ENCODE measurements at regions of chr10 and their contacts with region 1.

Region 1: DNA sequence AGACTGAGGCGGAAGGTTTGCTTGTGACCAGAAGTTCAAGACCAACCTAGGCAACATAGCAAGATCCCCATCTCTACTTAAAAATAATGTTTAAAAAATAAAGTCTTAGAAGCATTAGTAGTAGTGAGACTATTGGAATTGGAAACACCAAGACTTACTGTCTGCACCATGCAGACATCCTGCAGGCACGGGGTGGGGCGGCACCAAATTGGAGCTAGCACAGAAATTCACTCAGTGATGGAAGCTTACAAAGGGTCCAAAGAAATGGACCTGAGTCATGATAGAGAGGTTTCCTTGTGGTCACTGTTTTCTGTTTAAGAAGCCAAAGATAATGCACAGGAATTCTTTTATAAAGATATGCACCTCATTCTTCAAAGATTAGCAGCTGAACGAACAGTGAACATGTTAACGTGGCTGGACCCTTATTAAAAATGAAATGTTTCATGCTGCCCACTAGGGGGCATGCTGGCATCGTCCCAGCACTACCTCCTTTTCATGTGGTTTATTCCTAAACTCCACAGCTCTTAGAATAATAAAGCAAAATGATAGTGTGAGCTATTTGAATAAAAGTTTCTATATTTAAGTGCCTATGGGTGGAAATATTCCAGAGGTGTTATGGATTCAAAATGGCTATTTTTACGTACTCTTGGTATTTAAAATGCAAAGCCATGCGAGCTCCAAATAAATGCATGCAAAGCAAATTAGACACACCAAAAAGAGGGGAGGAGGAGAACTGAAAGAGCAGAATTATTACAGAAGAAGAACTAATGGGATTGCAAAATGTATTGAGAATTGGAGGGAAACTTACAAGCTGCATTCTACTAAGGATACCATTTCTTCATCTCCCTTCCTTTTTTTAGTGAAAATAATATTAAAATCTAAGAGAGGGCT is 28.6 kb downstream of the PDSS1 start:
- DNase-seq: peak; percentile 71
- ATAC-seq: peak; percentile 56
- H3K4me3 Mint-ChIP-seq: no peak overlapping the region
- H3K27ac Mint-ChIP-seq: no peak overlapping the region
- H3K4me1 Mint-ChIP-seq: peaks cover 4% of the 10 kb centered on the region
- H3K27me3 Mint-ChIP-seq: no peaks in the 10 kb centered on the region

Region 2: GRCh38 chr10:26682931-26683330 is 43.2 kb before region 1 on chr10:
- CTCF ChIA-PET with region 1: interaction called, 10 read pairs
- POLR2A ChIA-PET with region 1: no interaction called
- intact Hi-C with region 1: no loop called
- DNase-seq: no peak
- ATAC-seq: no peak
- H3K4me3 Mint-ChIP-seq: no peak overlapping the region
- H3K27ac Mint-ChIP-seq: peak overlapping the region; percentile 63
- H3K4me1 Mint-ChIP-seq: peaks cover 27% of the 10 kb centered on the region
- H3K27me3 Mint-ChIP-seq: no peaks in the 10 kb centered on the region

Region 3: DNA sequence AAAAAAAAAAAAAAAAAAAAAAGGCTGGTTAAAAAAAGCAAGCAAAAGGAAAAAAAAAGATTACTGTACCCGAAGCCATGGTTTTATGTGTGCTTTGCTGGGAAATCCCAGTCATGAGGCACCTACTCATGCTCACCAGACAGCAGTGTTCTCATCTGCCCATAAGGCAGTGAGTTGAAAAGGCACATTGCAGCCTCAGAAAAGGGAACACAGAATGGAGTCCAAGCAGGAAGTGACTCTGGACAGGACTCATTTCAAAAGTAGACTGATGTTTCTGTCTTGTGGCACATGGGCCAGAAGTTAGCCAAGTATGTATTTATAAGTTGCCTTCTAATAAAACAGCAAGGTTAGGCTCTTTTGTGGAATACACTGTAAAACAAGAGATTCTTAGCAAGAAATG is 11.6 kb after region 1 on chr10:
- CTCF ChIA-PET with region 1: interaction called, 23 read pairs
- POLR2A ChIA-PET with region 1: interaction called, 4 read pairs
- intact Hi-C with region 1: no loop called
- DNase-seq: peak; percentile 72
- ATAC-seq: peak; percentile 89
- H3K4me3 Mint-ChIP-seq: no peak overlapping the region
- H3K27ac Mint-ChIP-seq: peak overlapping the region; percentile 96
- H3K4me1 Mint-ChIP-seq: peaks cover 47% of the 10 kb centered on the region
- H3K27me3 Mint-ChIP-seq: no peaks in the 10 kb centered on the region

Region 4: DNA sequence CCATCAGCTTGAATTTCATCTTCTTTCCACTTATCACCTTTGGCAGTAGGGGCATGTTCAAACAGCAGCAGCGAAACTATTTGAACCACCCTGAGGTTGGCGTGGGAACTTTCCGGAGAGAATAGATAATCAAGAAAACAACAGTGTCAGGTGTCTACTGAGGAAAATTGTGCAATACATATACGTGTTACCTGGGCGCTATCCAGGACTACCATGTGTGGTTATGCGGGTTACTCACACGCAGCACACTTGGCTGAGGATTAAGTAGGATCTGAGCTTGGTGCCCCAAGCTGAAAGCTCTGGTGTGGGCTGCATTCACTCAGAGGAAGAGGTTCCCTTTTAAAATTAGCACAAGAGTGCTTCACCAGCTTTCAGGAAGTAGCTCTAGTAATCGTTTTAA is 143.4 kb after region 1 on chr10:
- CTCF ChIA-PET with region 1: interaction called, 13 read pairs
- POLR2A ChIA-PET with region 1: no interaction called
- intact Hi-C with region 1: no loop called
- DNase-seq: peak; percentile 60
- ATAC-seq: peak; percentile 83
- H3K4me3 Mint-ChIP-seq: no peak overlapping the region
- H3K27ac Mint-ChIP-seq: peak overlapping the region; percentile 64
- H3K4me1 Mint-ChIP-seq: peaks cover 8% of the 10 kb centered on the region
- H3K27me3 Mint-ChIP-seq: no peaks in the 10 kb centered on the region

Region 5: GRCh38 chr10:27360581-27361172 is 634.6 kb after region 1 on chr10:
- CTCF ChIA-PET with region 1: interaction called, 3 read pairs
- POLR2A ChIA-PET with region 1: no interaction called
- intact Hi-C with region 1: loop called in 1 of 2 experiments (anchors 10 kb)
- DNase-seq: peak; percentile 91
- ATAC-seq: peak; percentile 96
- H3K4me3 Mint-ChIP-seq: no peak overlapping the region
- H3K27ac Mint-ChIP-seq: no peak overlapping the region
- H3K4me1 Mint-ChIP-seq: peaks cover 3% of the 10 kb centered on the region
- H3K27me3 Mint-ChIP-seq: no peaks in the 10 kb centered on the region